Left ventricle myocardium superior (tissue), 1 donor: ENCODE measurements at regions of chr5 and their contacts with region 1.

Region 1: DNA sequence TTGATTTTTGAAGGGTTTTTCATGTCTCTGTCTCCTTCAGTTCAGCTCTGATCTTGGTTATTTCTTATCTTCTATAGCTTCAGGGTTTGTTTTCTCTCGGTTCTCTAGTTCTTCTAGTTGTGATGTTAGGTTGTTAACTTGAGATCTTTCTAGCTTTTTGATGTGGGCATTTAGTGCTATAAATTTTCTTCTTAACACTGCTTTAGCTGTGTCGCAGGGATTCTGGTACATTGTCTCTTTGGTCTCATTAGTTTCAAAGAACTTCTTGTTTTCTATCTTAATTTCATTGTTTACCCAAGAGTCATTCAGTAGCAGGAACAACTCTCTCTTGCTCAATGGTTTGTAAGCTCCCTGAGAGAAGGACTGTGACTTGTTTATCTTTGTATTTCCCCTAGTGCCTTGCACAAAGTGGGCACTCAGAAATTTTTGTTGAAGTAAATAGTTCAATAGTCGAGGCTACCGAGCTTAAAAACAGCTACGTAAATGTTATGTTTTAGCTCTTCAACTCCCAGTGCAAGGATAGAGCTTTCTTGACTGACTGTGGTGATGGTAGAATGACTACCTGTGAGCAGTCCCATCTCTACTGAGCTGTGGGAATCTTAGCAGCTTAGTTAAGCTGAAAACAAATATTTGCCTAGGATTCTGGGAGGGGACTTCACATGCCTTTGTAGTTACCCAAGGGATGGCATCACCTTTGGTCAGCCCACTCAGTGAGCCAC is 225.8 kb upstream of the ELL2 start:
- DNase-seq: no peak
- ATAC-seq: no peak

Region 2: DNA sequence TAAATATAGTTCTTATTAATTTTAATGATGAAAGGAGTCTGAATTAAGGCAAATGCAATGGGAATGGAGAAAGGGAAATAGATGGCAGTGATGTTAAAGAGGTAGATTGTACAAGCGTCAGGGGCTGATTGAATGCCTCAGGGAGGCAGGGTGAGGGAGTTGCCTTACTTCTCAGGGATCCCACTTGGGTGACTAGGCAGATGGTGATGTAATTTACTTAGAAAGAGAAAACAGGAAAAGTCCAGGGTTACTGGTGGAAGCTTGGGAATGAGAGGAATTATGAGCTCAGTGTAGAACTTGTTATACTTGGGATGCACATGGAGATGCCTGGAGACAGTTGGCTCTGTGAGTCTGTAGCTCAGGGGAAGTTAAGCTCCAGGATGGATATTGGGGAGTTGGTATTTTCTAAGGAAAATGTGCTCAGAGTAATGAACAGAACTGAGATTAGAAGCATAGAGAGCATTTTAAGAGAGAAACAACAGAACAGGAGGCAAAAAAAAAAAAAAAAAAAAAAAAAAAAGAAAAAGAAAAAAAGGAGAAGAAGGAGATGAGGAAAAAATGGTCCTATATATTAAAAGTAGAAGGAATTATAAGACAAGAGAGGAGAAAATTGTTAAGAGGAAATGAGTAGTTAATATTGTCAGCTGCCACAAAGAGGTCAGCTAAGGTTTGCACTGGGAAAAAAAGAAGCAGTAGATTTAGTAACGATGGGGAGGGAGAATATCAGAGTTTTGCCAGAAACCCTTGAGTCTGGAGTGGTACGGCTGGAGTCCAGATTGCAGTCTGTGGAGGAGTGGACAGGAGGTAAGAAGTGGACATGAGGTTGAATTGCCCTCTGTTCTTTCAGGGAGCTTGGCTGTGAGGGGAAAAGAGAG is 137.8 kb before region 1 on chr5:
- intact Hi-C with region 1: loop called (anchors 10 kb)
- DNase-seq: no peak
- ATAC-seq: peak; percentile 41

Region 3: DNA sequence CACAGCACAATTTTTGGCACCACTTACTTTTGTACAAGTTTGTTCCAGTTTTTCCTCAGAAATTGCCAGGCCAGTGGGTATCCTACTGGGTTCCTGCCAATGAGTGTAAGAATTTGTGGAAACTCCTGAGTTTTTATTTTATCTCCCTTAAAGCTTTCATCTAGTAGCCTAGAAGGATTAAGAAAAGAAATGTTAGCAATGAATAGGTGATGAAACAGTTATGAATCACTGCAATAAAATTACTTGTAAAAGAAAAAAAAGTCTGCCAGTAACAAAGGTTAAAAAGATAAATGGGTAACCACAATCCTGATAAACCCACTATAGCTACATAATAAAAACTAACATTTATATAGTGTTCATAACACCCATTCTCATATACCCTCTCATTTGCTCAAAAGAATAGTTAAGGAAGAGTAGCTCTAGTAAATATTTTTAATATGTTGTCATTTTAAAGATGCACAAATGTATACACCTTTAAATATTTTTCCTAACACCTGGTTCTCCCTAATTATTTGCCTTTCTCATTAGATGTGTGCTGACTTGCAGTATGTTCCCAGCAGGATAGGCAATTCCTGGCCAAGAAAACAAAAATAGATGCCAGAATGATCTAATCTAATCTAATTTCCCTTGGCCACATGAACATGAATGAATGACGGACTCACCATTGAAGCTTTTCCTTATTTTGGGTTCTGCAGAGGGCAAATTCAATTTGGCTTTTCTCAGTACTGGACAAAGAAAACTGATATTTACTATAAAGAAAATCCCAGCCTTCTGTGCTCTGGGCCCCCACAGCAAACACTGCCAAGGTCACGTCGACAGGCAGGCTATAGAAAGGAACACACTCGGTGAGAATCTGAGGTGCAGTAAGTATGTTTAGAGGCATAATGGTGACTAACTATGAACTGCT is 593.8 kb after region 1 on chr5:
- intact Hi-C with region 1: no loop called
- DNase-seq: no peak
- ATAC-seq: peak; percentile 15